ENCODE measurements at regions of chr12 and their contacts with region 1.

Region 1: DNA sequence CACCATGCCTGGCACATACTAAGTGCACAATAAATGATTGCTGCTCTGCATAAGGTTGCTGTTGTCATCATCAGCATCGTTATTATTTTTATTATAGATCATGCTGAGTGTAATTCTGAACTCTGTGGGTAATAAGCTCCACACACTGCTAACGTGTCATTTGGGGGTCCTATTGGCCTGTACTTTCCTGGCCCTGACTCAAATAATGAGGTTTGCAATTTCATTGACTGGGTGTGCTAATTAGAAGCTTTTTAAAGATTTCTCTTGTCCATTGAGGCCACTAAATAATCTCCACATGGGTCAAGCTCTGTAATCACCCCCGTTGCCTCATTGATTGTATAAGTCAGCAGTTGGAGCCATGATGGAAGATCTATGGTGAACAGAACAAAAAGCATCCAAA is 320.8 kb upstream of the TMPO start:
- DNase-seq: no peak
- H3K4me3 ChIP-seq: no peak overlapping the region
- H3K27ac ChIP-seq: no peak overlapping the region
- H3K4me1 ChIP-seq: no peaks in the 10 kb centered on the region
- CTCF ChIP-seq: no peak

Region 2: DNA sequence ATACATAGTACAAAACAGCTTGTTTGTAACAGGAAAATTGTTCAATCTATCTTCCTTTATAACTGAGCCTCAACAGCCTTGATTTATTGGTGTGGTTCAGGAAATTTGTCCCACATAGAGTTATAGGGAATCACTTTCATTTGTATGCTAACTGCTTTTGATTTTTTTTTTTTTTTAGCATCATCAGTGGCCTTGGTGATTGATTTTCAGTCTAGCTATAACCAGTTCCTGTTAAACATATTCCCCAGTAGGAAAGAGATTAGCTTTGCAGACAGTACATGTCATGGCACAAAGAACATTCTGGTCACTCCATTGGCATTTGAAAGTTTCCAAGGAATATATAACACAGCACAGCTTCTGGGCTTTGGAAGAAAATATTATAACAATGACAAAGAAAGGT is 16.5 kb before region 1 on chr12:
- CTCF ChIA-PET with region 1: no interaction called
- POLR2A ChIA-PET with region 1: interaction called, 14 read pairs
- intact Hi-C with region 1: no loop called
- DNase-seq: no peak
- H3K4me3 ChIP-seq: no peak overlapping the region
- H3K27ac ChIP-seq: no peak overlapping the region
- H3K4me1 ChIP-seq: peaks cover 4% of the 10 kb centered on the region
- CTCF ChIP-seq: no peak

Measured in OCI-LY7 (cell line).